ENCODE measurements at regions of chr9 and their contacts with region 1.

Region 1: GRCh38 chr9:126232461-126232860 is 94.2 kb upstream of the MVB12B start:
- H3K4me3 ChIP-seq: no peak overlapping the region
- H3K27ac ChIP-seq: no peak overlapping the region
- H3K4me1 ChIP-seq: no peaks in the 10 kb centered on the region
- CTCF ChIP-seq: no peak

Region 2: DNA sequence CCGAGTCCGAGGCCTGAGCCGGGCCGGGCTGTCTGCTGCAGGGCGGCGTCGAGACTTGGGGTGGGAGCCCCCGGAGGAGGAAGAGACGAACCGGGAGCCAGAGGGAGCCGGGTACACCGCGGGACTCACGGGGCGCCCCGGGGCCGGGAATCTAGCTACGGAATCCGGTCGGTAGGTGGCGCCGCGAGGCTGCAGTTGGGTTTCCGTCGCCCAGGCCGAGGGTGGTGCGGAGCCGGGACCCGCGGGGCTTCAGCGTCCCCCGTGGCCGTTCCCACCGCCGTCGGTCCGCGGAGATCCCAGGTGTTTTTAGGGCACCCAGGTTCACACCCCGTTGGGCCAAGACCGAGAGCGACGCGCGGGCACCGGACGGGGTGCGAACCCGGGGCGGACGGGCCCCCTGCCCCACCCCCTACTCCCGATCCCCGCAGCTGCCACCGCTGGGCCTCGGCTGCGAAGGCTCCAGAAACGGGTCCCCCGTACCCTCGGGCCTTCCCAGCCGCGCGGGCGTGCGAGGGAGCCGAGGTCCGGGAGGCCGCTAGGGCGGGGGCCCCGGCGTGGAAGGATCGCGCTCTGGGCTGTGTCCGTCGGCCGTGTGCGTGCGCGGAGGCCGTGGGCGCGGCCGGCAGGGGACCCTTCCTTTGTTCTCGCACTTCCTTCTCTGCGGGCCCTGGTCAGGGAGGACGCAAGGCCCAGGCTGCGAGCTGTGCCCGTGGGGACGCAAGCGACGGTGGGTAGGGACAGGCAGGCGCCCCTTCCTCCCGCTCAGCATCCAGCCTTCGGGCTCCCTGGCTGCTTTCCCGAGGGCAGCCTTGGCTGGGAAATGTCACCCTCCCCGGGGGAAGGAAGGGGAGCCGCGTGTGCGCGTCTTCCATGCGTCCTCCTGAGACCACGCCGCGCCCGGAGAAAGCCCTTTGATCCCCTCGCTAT is 824.2 kb before region 1 on chr9:
- CTCF ChIA-PET with region 1: interaction called, 11 read pairs
- POLR2A ChIA-PET with region 1: no interaction called
- H3K4me3 ChIP-seq: peak overlapping the region; percentile 56
- H3K27ac ChIP-seq: peak overlapping the region; percentile 50; the same call in 1 of the 2 replicates
- H3K4me1 ChIP-seq: no peaks in the 10 kb centered on the region
- CTCF ChIP-seq: peak; percentile 90

Region 3: DNA sequence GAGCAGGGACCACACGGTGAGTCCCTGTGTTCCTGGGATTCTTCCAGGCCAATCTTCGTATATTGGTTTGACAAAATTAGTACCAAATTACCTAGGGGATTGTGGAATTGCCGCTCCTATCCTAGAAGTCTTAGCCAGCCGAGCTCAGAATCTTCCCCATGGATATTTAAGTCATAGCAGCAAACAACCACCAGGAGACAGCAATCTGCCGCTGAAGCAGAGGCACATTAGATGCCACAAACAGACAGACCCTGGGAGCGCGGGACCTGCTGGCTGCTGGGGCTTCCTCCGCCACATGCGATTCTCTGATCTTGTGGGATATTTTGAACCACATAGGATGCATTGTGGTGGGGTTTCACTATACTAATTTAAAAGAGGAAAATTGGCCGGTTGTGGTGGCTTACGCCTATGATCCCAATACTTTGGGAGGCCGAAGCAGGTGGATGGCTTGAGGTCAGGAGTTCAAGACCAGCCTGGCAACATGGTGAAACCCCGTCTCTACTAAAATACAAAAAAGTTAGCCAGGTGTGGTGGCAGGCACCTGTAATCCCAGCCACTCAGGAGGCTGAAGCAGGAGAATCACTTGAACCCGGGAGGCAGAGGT is 540.6 kb after region 1 on chr9:
- CTCF ChIA-PET with region 1: no interaction called
- POLR2A ChIA-PET with region 1: no interaction called
- H3K4me3 ChIP-seq: no peak overlapping the region
- H3K27ac ChIP-seq: no peak overlapping the region
- H3K4me1 ChIP-seq: no peaks in the 10 kb centered on the region
- CTCF ChIP-seq: no peak